ENCODE measurements at regions of chr2 and their contacts with region 1.

Region 1: DNA sequence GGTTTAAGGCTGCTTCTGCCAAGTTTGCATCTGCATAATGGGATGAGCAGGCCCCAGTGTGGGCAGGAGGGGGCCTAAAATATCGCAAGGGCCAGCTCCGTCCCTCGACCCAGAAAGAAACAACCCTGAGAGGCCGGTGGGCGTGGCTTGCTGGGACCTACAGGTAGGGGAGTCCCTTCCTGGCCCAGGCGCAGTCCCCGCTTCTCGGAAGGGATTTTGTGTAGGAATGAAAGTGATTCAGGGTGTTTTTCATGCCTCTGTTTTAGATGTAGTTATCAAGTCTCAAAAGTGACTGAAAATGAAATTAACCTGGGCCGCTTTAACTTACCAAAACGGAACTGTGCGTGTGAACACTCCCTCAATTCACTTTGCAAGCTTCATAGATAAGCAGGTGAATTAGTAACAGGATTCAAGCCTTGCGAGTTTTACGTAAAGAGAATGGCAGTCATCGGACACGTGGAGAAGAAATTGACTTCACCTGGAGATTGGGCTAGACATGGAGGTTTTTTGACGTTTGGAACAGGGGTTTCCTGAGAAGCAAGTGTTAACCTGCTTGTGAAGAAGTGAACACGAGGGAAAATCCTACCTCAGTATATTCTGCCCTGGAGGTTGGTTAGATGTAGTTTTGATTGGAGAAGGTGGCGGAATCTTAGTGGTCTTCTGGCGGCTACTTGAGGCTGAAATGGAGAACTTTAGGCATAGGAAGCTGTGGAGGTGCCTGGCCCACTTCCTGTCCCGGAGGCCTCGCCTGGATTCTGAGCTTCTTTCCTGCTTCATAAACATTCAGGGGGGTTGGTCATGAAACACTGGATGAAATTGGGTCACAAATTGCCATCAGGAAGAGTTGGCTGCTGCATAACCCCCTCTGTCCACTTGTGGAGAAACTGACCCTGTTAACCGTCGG is 1.7 kb downstream of the NCK2 start:
- DNase-seq: peak; percentile 91
- H3K4me3 Mint-ChIP-seq: peak overlapping the region; percentile 82
- H3K27ac Mint-ChIP-seq: peak overlapping the region; percentile 95
- H3K4me1 Mint-ChIP-seq: peaks cover 76% of the 10 kb centered on the region
- H3K27me3 Mint-ChIP-seq: no peaks in the 10 kb centered on the region

Region 2: GRCh38 chr2:105576440-105577252 is 169.8 kb before region 1 on chr2:
- CTCF ChIA-PET with region 1: interaction called, 10 read pairs
- DNase-seq: no peak
- H3K4me3 Mint-ChIP-seq: no peak overlapping the region
- H3K27ac Mint-ChIP-seq: no peak overlapping the region
- H3K4me1 Mint-ChIP-seq: peaks cover 21% of the 10 kb centered on the region
- H3K27me3 Mint-ChIP-seq: peaks cover 21% of the 10 kb centered on the region

Region 3: DNA sequence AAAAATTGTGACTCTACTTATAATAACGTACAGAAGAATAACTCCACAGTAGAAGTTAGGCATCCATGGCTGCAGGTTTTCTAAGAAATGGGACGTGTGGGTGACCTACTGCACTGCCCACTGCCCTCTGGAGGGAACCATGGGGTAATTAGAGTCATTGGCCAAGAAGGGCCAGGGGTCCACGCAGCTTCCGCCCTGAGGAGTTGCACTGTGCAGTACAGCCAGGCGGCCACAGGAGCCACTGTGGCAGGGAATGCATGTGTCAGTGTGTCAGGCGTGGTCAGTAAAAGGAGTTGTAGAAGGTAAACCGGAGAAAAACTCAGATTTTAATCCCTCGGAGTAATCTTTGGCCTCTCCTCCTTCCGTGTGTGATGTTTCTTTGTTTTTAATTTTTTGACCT is 23.1 kb after region 1 on chr2:
- CTCF ChIA-PET with region 1: no interaction called
- DNase-seq: no peak
- H3K4me3 Mint-ChIP-seq: no peak overlapping the region
- H3K27ac Mint-ChIP-seq: peak overlapping the region; percentile 91
- H3K4me1 Mint-ChIP-seq: peaks cover 99% of the 10 kb centered on the region
- H3K27me3 Mint-ChIP-seq: no peaks in the 10 kb centered on the region

Region 4: GRCh38 chr2:105843476-105844374 is 97.3 kb after region 1 on chr2:
- CTCF ChIA-PET with region 1: no interaction called
- DNase-seq: no peak
- H3K4me3 Mint-ChIP-seq: no peak overlapping the region
- H3K27ac Mint-ChIP-seq: peak overlapping the region; percentile 73
- H3K4me1 Mint-ChIP-seq: peaks cover 78% of the 10 kb centered on the region
- H3K27me3 Mint-ChIP-seq: no peaks in the 10 kb centered on the region

Measured in activated naive CD4-positive, alpha-beta T cell treated with anti-CD3 and anti-CD28 coated beads, Interleukin-2, amount 10 ng/mL, durations not matched to agents 7 days and 5 days (primary cell).